Common myeloid progenitor, CD34-positive (primary cell): ENCODE measurements at regions of chr1 and their contacts with region 1.

Region 1: DNA sequence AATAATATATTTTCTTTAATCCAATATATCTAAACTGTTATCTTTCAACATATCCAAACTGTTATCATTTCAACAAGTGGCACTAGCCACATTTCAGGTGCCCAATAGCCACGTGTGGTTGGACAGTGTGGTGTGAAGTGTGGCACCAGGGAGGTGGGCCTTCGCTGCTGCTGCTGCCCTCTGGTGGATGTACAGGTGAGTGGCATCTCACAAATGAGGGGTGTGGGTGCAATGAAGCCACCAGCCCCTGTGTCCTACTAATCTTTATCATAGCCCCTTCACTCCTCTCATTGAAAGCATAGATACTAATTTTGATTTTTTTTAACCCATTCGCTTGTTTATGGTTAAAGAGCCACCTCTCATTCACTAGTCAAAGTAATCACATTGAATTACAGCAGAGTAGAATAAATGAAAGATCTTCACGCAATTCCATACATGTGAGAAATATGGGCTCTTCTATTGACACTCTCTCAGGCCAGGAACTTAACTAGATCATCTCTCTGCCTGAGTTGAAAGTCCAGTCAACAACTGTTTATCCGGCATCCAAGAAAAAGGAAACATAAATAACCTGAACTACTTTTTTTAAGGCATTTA is 499.2 kb downstream of the OMA1 start:
- DNase-seq: peak; percentile 21 to 37 (median 35)
- H3K4me3 ChIP-seq: no peak overlapping the region
- H3K27ac ChIP-seq: no peak overlapping the region
- H3K4me1 ChIP-seq: no peaks in the 10 kb centered on the region
- H3K27me3 ChIP-seq: no peaks in the 10 kb centered on the region

Region 2: GRCh38 chr1:56831871-56832693 is 1215.3 kb before region 1 on chr1:
- CTCF ChIA-PET with region 1: interaction called, 10 read pairs
- POLR2A ChIA-PET with region 1: no interaction called
- DNase-seq: peak; percentile 70 to 86 (median 83)
- H3K4me3 ChIP-seq: no peak overlapping the region
- H3K27ac ChIP-seq: no peak overlapping the region
- H3K4me1 ChIP-seq: no peaks in the 10 kb centered on the region
- H3K27me3 ChIP-seq: peaks cover 0 to 25% (median 0%) of the 10 kb centered on the region in 5 experiments

Region 3: DNA sequence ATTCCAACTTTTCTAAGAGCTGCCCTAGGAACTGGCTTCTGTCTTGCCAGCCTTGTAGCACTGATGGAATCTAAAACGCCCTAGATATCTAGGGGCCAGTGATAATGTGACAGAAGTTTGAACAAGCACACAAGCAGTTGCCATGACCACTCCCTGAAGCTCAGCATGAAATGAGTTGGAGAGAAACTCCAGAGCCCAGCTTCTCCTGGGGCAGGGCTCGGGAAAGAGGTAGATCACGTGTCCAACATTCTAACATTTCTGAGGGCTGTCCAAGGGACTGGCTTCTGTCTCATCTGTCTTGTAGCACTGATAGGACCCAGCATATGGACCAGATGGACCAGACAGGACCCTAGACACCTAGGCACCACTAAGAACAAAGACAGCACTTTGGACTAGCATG is 461.3 kb after region 1 on chr1:
- CTCF ChIA-PET with region 1: no interaction called
- POLR2A ChIA-PET with region 1: no interaction called
- DNase-seq: no peak
- H3K4me3 ChIP-seq: no peak overlapping the region
- H3K27ac ChIP-seq: no peak overlapping the region
- H3K4me1 ChIP-seq: no peaks in the 10 kb centered on the region
- H3K27me3 ChIP-seq: no peaks in the 10 kb centered on the region